ENCODE measurements at regions of chr9 and their contacts with region 1.

Region 1: GRCh38 chr9:35051069-35051967 is 21.1 kb downstream of the VCP start:
- H3K4me3 ChIP-seq: no peak overlapping the region
- H3K27ac ChIP-seq: no peak overlapping the region
- H3K4me1 ChIP-seq: no peaks in the 10 kb centered on the region
- CTCF ChIP-seq: no peak

Region 2: GRCh38 chr9:34974664-34975063 is 76.7 kb before region 1 on chr9:
- CTCF ChIA-PET with region 1: no interaction called
- POLR2A ChIA-PET with region 1: no interaction called
- H3K4me3 ChIP-seq: no peak overlapping the region
- H3K27ac ChIP-seq: no peak overlapping the region
- H3K4me1 ChIP-seq: no peaks in the 10 kb centered on the region
- CTCF ChIP-seq: no peak

Region 3: GRCh38 chr9:34994260-34994899 is 56.9 kb before region 1 on chr9:
- CTCF ChIA-PET with region 1: interaction called, 17 read pairs
- POLR2A ChIA-PET with region 1: no interaction called
- H3K4me3 ChIP-seq: no peak overlapping the region
- H3K27ac ChIP-seq: no peak overlapping the region
- H3K4me1 ChIP-seq: peaks cover 2% of the 10 kb centered on the region; the same call in 1 of the 2 replicates
- CTCF ChIP-seq: peak; percentile 43; the same call in 1 of the 2 replicates